HepG2 (cell line): ENCODE measurements at regions of chr1 and their contacts with region 1.

Region 1: DNA sequence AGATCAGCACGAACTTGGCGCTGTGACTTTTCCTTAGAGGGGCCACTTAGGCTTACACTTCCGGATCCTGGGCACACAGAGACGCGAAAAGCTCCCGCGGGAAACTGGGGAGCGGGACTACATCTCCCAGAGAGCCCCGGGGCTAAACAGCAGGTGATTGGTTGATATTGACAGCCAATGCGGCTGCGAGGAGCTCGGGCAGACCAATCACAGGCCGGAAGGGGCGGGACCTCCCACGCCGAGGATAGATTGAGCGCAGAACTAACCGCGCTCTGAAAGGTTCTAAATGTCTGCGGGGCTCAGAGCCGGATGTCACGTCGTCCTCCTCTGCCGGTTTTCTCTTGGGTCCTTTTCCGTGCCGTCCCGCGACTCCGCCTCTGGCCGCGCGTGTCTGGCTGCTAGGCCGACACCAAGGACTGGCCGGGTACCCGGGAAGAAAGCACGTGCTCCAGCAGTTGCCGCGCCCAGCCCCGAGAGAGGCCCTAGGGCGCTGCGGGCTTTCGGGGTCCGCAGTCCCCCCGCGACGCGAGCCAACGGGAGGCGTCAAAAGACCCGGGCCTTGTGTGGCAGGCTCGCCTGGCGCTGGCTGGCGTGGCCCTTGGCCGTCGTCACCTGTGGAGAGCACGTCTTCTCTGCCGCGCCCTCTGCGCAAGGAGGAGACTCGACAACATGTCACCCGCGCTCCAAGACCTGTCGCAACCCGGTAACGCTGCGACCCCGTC is at the start of gene MTR:
- DNase-seq: peak; percentile 97
- ATAC-seq: peak; percentile 99
- H3K4me3 ChIP-seq: peak within 1 kb of the TSS; percentile 86 to 87 (median 86)
- H3K27ac ChIP-seq: peak within 1 kb of the TSS; percentile 87
- H3K4me1 ChIP-seq: peaks cover 35% of the 10 kb centered on the region
- H3K27me3 ChIP-seq: no peaks in the 10 kb centered on the region
- CTCF ChIP-seq: no peak; the same call in 1 of the 2 replicates
- EP300 ChIP-seq: 0 out of 4 replicates have a peak, but pooled peaks of 1 of the 2 experiments have one; percentile 7
- POLR2A ChIP-seq: peak; percentile 90 to 92
- RAD21 ChIP-seq: no peak
- total RNA-seq, gene MTR: 36.1 and 51.6 TPM in 2 replicates

Region 2: DNA sequence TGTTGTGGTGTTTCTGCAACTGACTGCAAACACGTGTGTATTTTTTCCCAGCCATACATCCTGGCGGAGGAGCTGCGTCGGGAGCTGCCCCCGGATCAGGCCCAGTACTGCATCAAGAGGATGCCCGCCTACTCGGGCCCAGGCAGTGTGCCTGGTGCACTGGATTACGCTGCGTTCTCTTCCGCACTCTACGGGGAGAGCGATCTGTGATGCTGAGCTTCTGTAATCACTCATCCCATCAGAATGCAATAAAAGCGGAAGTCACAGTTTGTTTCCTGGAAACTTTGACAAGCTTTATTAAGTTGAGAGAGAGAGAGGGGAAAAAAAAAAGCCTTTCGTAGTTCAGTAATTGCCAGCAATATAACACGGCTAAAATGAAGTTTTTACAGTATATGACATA is 32.8 kb before region 1 on chr1:
- CTCF ChIA-PET with region 1: no interaction called
- POLR2A ChIA-PET with region 1: no interaction called
- in situ Hi-C with region 1: no loop called
- intact Hi-C with region 1: no loop called
- DNase-seq: no peak
- ATAC-seq: no peak
- H3K4me3 ChIP-seq: no peak overlapping the region
- H3K27ac ChIP-seq: no peak overlapping the region
- H3K4me1 ChIP-seq: peaks cover 32% of the 10 kb centered on the region
- H3K27me3 ChIP-seq: no peaks in the 10 kb centered on the region
- CTCF ChIP-seq: no peak
- EP300 ChIP-seq: no peak
- POLR2A ChIP-seq: no peak
- RAD21 ChIP-seq: no peak

Region 3: GRCh38 chr1:236808564-236809130 is 13.5 kb after region 1 on chr1:
- CTCF ChIA-PET with region 1: no interaction called
- POLR2A ChIA-PET with region 1: interaction called, 15 read pairs
- in situ Hi-C with region 1: no loop called
- intact Hi-C with region 1: no loop called
- DNase-seq: peak; percentile 17
- ATAC-seq: no peak
- H3K4me3 ChIP-seq: no peak overlapping the region
- H3K27ac ChIP-seq: no peak overlapping the region
- H3K4me1 ChIP-seq: peaks cover 29% of the 10 kb centered on the region
- H3K27me3 ChIP-seq: no peaks in the 10 kb centered on the region
- CTCF ChIP-seq: no peak
- EP300 ChIP-seq: no peak
- POLR2A ChIP-seq: no peak
- RAD21 ChIP-seq: no peak

Region 4: GRCh38 chr1:236844499-236845271 is 49.5 kb after region 1 on chr1:
- CTCF ChIA-PET with region 1: no interaction called
- POLR2A ChIA-PET with region 1: interaction called, 19 read pairs
- in situ Hi-C with region 1: no loop called
- intact Hi-C with region 1: loop called (anchors 2 kb)
- DNase-seq: peak; percentile 96
- ATAC-seq: peak; percentile 98
- H3K4me3 ChIP-seq: peak overlapping the region; percentile 27 to 53 (median 33); a peak in 4 of 6 replicates
- H3K27ac ChIP-seq: peak overlapping the region; percentile 95
- H3K4me1 ChIP-seq: peaks cover 42% of the 10 kb centered on the region
- H3K27me3 ChIP-seq: no peaks in the 10 kb centered on the region
- CTCF ChIP-seq: no peak
- EP300 ChIP-seq: peak in 1 of 2 experiments; percentile 54; a peak in 2 of 4 replicates
- POLR2A ChIP-seq: peak in 1 of 2 experiments; percentile 54; a peak in 1 of 4 replicates
- RAD21 ChIP-seq: no peak